A549 (cell line): ENCODE measurements at regions of chrX and their contacts with region 1.

Region 1: GRCh38 chrX:78029663-78030062 is 60.2 kb upstream of the PGAM4 start:
- DNase-seq: peak; percentile 6 to 53
- ATAC-seq: peak; percentile 66 to 85; a peak in 3 of 6 replicates
- H3K4me3 ChIP-seq: no peak overlapping the region
- H3K27ac ChIP-seq: no peak overlapping the region
- H3K4me1 ChIP-seq: no peaks in the 10 kb centered on the region
- CTCF ChIP-seq: peak; percentile 81
- EP300 ChIP-seq: no peak
- POLR2A ChIP-seq: no peak
- RAD21 ChIP-seq: peak; percentile 90 to 95

Region 2: DNA sequence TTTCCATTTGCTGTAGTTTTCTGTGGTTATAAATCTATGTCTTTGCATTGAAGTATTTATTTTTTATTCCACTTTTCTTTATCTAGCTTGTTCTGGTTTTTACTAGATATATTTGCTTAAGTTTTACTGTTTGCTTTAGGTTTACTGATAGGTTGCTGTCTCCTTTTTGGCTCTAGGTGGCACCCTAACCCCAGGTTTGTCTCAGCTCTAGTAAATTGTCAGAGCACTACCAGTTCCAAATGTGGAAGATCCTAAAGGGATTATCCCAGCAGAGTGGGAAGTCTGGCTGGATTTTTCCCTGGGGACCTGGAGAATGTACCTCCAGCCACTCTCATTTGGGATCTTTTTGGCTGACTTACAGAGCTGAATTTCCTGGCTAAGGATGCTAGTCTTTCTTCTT is 1750.7 kb before region 1 on chrX:
- CTCF ChIA-PET with region 1: interaction called, 17 read pairs
- POLR2A ChIA-PET with region 1: no interaction called
- DNase-seq: peak; percentile 6 to 58
- ATAC-seq: peak; percentile 76 to 89; a peak in 5 of 6 replicates
- H3K4me3 ChIP-seq: no peak overlapping the region
- H3K27ac ChIP-seq: no peak overlapping the region
- H3K4me1 ChIP-seq: no peaks in the 10 kb centered on the region
- CTCF ChIP-seq: peak; percentile 71
- EP300 ChIP-seq: no peak
- POLR2A ChIP-seq: no peak
- RAD21 ChIP-seq: peak; percentile 77 to 83

Region 3: DNA sequence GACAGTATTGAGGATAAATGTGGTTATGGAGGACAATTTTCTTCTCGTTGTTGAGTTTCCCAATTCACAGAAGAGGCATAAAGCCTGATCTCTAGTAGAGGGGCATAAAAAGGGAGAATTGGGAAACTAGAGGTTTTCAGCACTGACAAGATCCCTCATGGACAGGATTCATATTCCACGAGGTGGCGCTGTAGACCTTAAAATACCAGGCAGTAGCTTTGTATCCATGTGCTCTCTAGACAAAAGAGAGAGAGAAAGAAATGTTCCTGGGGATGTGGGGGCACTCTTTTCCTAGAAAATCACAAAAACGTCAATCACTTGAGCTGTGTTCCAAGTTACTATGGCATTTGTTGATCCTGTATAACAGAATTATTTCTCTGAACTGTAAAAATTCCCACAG is 1473.8 kb before region 1 on chrX:
- CTCF ChIA-PET with region 1: interaction called, 13 read pairs
- POLR2A ChIA-PET with region 1: no interaction called
- DNase-seq: peak; percentile 2 to 68
- ATAC-seq: peak in 1 of 2 experiments; percentile 80; a peak in 3 of 6 replicates
- H3K4me3 ChIP-seq: no peak overlapping the region
- H3K27ac ChIP-seq: no peak overlapping the region
- H3K4me1 ChIP-seq: no peaks in the 10 kb centered on the region
- CTCF ChIP-seq: peak; percentile 33; the same call in 2 of the 3 replicates
- EP300 ChIP-seq: no peak
- POLR2A ChIP-seq: no peak
- RAD21 ChIP-seq: peak; percentile 47 to 63

Region 4: DNA sequence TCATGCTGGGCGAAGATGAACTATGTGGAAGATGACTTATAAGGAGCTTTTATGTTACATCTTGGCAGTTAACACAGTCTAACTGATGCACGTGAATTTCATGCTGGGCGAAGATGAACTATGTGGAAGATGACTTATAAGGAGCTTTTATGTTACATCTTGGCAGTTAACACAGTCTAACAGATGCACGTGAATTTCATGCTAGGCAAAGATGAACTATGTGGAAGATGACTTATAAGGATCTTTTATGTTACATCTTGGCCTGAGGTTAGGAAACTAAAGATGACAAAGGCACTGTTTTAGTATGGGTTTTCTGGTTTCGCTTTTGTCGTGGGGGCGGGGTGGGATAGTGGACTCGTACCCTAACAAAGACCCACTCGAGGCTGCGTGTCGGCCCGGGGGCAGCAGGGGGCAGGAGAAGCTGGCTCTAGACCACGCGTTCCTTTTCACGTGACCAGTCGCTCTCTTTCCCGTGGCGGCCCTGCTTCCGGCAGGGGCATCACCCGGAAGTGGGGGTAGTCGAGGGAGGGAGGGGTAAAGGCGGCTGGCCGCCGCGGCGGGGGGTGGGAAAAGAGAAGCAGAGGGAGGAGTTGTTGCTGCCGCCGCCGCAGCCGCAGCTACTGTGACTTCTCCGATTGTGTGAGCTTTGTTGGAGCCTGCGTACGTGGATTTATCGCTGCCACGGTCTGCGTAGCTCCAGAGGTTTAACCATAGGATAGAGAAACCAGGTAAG is 119.4 kb before region 1 on chrX and contains the start of gene ATP7A:
- CTCF ChIA-PET with region 1: interaction called, 52 read pairs
- POLR2A ChIA-PET with region 1: no interaction called
- DNase-seq: peak; percentile 92 to 95
- ATAC-seq: peak; percentile 96 to 98
- H3K4me3 ChIP-seq: peak within 1 kb of the TSS; percentile 58
- H3K27ac ChIP-seq: peak within 1 kb of the TSS; percentile 80 to 86
- H3K4me1 ChIP-seq: peaks cover 12% of the 10 kb centered on the region; the same call in 2 of the 3 replicates
- CTCF ChIP-seq: peak; percentile 62
- EP300 ChIP-seq: no peak
- POLR2A ChIP-seq: 0 out of 2 replicates have a peak, but pooled peaks have one; percentile 39
- RAD21 ChIP-seq: peak; percentile 77 to 88
- polyA plus RNA-seq, gene ATP7A: 12.2 and 13.0 TPM in 2 replicates